ENCODE measurements at regions of chr17 and their contacts with region 1.

Region 1: DNA sequence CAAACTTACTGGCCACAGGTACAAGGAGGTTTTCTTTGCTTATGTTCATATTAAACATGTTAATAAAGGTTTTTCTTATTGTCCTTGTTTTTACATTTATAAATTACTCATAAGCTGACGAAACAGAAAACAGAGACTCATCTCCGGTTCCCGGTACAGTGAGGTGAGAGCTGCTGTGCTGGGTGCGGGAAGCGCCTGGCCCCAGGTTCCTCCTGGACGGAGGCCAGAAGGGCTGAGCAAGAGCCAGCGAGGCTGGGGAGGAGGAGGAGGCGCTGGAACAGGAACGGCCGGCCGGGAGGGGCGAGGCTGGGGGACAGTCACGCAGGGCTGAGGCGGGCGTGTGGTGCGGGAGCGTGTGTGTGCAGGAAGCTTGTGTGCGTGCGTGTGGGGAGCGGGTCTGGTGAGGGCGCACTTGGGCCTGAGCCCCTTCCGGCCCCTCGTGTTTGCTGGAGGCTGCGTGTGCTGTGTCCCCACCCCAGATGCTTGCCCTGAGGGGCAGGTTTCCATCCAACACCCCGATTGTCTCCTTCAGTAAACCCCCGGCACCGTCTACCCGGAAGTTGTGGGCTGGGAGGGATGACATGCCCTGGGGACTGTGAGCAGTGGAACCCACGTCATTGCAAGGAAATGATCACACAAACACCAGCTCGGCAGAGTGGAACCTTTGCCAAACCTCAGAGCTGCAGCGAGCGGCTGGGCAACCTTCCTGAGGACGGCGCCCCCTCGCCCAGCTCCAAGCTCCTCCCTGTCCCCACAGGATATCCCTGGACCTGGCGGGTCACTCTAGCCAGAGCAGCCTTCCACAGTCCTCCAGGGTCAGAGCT is 19.5 kb downstream of the CD7 start:
- DNase-seq: peak; percentile 91 to 96
- H3K4me3 ChIP-seq: peak overlapping the region; percentile 54 to 67
- H3K27ac ChIP-seq: peak overlapping the region; percentile 83 to 90
- H3K4me1 ChIP-seq: peaks cover 12 to 31% of the 10 kb centered on the region in 2 donors
- H3K27me3 ChIP-seq: no peaks in the 10 kb centered on the region
- CTCF ChIP-seq: peak in 1 of 3 experiments; percentile 10

Region 2: DNA sequence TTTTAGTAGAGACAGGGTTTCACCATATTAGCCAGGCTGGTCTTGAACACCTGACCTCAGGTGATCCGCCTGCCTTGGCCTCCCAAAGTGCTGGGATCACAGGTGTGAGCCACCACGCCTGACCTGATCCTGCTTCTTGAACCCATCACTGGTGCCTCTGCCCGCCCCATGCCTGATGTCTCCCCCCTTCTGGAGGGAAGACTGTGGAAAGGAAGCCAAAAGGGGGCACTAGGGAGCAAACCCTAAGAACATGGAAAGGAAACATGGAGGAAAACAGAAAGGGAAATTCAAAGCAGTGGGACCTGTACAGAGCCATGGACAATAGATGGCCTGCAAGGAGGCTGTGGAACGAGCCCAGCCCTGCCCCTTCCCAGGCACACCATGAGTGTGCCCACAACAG is 168.8 kb before region 1 on chr17:
- intact Hi-C with region 1: no loop called
- DNase-seq: no peak
- H3K4me3 ChIP-seq: no peak overlapping the region
- H3K27ac ChIP-seq: no peak overlapping the region
- H3K4me1 ChIP-seq: no peaks in the 10 kb centered on the region
- H3K27me3 ChIP-seq: no peaks in the 10 kb centered on the region
- CTCF ChIP-seq: no peak

Region 3: GRCh38 chr17:82267575-82268379 is 30.1 kb before region 1 on chr17:
- intact Hi-C with region 1: loop called (anchors 1 kb)
- DNase-seq: peak; percentile 91 to 97
- H3K4me3 ChIP-seq: peak overlapping the region; percentile 5 to 40
- H3K27ac ChIP-seq: peak overlapping the region; percentile 91 to 92
- H3K4me1 ChIP-seq: peaks cover 17 to 38% of the 10 kb centered on the region in 2 donors
- H3K27me3 ChIP-seq: no peaks in the 10 kb centered on the region
- CTCF ChIP-seq: no peak

Region 4: GRCh38 chr17:82351716-82352488 is 54.0 kb after region 1 on chr17:
- intact Hi-C with region 1: no loop called
- DNase-seq: peak in 1 of 2 donors; percentile 92
- H3K4me3 ChIP-seq: no peak overlapping the region
- H3K27ac ChIP-seq: no peak overlapping the region
- H3K4me1 ChIP-seq: peaks cover 7 to 10% of the 10 kb centered on the region in 2 donors
- H3K27me3 ChIP-seq: no peaks in the 10 kb centered on the region
- CTCF ChIP-seq: peak in 2 of 3 experiments; percentile 94 to 96